ENCODE measurements at regions of chr2 and their contacts with region 1.

Region 1: GRCh38 chr2:106551417-106552130 is 64.4 kb downstream of the CD8B2 start:
- DNase-seq: no peak
- H3K4me3 ChIP-seq: no peak overlapping the region
- H3K27ac ChIP-seq: no peak overlapping the region
- H3K4me1 ChIP-seq: no peaks in the 10 kb centered on the region
- H3K27me3 ChIP-seq: no peaks in the 10 kb centered on the region
- CTCF ChIP-seq: no peak
- POLR2A ChIP-seq: no peak

Region 2: GRCh38 chr2:106104332-106105062 is 447.1 kb before region 1 on chr2:
- intact Hi-C with region 1: loop called (anchors 10 kb)
- DNase-seq: peak; percentile 66
- H3K4me3 ChIP-seq: no peak overlapping the region
- H3K27ac ChIP-seq: no peak overlapping the region
- H3K4me1 ChIP-seq: peaks cover 5% of the 10 kb centered on the region
- H3K27me3 ChIP-seq: no peaks in the 10 kb centered on the region
- CTCF ChIP-seq: peak; percentile 77 to 97 (median 87)
- POLR2A ChIP-seq: no peak

Region 3: DNA sequence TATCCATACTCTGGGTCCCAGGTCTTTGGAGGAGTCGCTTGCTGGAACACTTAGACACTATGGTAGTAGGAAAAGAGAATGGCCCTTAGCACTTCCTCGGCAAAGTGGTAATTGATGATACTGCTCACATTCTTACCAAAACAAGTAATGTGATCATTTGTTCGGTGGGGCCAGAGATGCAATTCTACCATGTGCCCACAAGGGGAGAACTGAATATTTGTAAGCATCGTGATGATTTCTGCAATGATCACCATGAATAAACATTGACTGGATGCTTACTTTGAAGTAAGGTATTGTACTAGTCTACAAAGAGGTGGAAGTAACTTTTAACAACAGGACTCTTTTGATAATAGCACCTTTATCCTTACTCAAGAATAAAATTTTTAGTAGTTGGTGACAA is 45.3 kb after region 1 on chr2:
- intact Hi-C with region 1: no loop called
- DNase-seq: no peak
- H3K4me3 ChIP-seq: no peak overlapping the region
- H3K27ac ChIP-seq: no peak overlapping the region
- H3K4me1 ChIP-seq: no peaks in the 10 kb centered on the region
- H3K27me3 ChIP-seq: no peaks in the 10 kb centered on the region
- CTCF ChIP-seq: peak in 2 of 3 experiments; percentile 16 to 55
- POLR2A ChIP-seq: no peak

Region 4: DNA sequence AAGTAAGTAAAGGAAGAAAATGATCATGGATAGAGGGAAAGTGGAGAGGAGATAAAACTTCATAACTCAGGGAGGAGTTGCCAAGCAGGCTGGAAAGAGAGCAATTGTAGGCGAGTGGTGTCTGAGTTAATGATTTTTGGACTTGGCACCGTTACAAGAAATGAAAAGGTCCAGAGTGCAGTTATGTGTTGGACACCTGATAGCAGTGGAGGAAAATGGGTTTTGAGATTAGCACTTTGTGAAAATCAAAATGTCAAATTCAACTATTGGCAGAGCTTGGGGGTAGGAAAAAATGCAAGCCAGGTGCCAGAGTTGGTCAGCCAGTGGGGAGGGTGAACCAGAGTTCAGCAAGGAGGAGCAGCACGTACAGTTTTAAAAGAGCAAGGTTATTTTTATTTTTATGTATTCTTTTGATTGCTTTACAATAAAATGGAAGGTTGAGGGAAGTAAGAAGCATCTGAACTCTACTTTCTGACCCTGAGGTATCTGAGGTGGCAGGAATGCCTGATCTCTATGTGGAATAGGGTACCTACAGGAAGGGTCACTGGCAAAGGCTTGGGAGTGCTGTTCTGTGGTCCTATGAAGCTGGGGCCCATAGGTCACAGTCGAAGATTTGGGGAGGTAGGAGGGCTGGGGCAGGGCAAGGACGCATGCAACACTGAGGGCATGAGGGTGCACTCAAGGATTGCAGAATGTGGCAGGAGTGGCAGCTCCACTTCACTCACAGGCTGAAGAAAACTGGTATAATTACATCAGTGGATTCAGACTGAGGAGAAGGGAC is 63.1 kb after region 1 on chr2:
- intact Hi-C with region 1: no loop called
- DNase-seq: no peak
- H3K4me3 ChIP-seq: no peak overlapping the region
- H3K27ac ChIP-seq: no peak overlapping the region
- H3K4me1 ChIP-seq: no peaks in the 10 kb centered on the region
- H3K27me3 ChIP-seq: no peaks in the 10 kb centered on the region
- CTCF ChIP-seq: no peak
- POLR2A ChIP-seq: no peak

Region 5: GRCh38 chr2:106771811-106772210 is 220.2 kb after region 1 on chr2:
- intact Hi-C with region 1: no loop called
- DNase-seq: no peak
- H3K4me3 ChIP-seq: no peak overlapping the region
- H3K27ac ChIP-seq: no peak overlapping the region
- H3K4me1 ChIP-seq: no peaks in the 10 kb centered on the region
- H3K27me3 ChIP-seq: no peaks in the 10 kb centered on the region
- CTCF ChIP-seq: no peak
- POLR2A ChIP-seq: no peak